Dendritic cell treated with granulocyte-macrophage colony-stimulating factor and Interleukin-4, amounts not matched to agents 40 ng/mL and 50 ng/mL, for 4 days (primary cell): ENCODE measurements at regions of chr10 and their contacts with region 1.

Region 1: GRCh38 chr10:3711918-3712317 is 73.1 kb downstream of the KLF6 start:
- H3K4me3 Mint-ChIP-seq: no peak overlapping the region
- H3K27ac Mint-ChIP-seq: no peak overlapping the region
- H3K4me1 Mint-ChIP-seq: peaks cover 19% of the 10 kb centered on the region
- H3K27me3 Mint-ChIP-seq: no peaks in the 10 kb centered on the region

Region 2: GRCh38 chr10:3662775-3663174 is 49.1 kb before region 1 on chr10:
- intact Hi-C with region 1: loop called (anchors 2 kb)
- H3K4me3 Mint-ChIP-seq: no peak overlapping the region
- H3K27ac Mint-ChIP-seq: no peak overlapping the region
- H3K4me1 Mint-ChIP-seq: peaks cover 8% of the 10 kb centered on the region
- H3K27me3 Mint-ChIP-seq: peaks cover 7% of the 10 kb centered on the region